HepG2 (cell line): ENCODE measurements at regions of chr9 and their contacts with region 1.

Region 1: DNA sequence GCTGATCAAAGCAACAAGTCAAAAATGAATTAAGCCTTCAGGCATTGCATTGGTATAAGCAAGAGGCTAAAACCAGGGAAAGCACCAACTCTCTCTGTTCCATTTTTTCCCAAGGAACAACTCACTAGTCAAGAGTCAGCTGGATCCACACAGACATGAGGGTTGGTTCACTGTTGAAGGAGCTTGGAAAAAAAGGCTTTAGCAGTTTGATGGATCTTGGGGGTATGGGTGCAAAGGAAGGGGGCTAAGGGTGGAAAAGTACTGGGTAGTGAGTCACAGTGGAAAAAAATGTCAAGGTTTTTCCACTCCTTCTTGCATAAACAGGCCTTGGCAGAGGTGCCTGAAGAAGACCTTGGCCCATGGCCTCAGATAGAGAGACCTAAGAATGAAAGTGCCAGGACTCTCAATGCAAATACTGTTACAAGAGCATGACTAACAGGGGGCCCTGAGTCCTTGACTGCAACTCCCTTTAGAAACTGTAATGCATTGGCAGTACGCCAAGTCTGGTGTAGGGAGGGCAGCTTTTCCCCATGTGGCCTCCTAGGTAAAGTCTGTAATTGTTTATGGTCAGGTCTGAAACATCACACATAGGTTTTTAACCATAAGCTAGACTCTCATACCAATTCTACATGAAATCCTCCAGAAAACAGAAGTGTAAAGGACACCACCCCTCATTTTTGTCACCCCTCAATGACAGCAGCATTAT is 23.7 kb downstream of the ACTL7A start:
- DNase-seq: peak; percentile 100
- ATAC-seq: peak; percentile 94
- H3K4me3 ChIP-seq: peak overlapping the region; percentile 57 to 67 (median 66); a peak in 5 of 6 replicates
- H3K27ac ChIP-seq: peak overlapping the region; percentile 99
- H3K4me1 ChIP-seq: peaks cover 90% of the 10 kb centered on the region
- H3K27me3 ChIP-seq: no peaks in the 10 kb centered on the region
- CTCF ChIP-seq: no peak
- EP300 ChIP-seq: peak; percentile 99 to 100
- POLR2A ChIP-seq: peak; percentile 75 to 83
- RAD21 ChIP-seq: no peak

Region 2: DNA sequence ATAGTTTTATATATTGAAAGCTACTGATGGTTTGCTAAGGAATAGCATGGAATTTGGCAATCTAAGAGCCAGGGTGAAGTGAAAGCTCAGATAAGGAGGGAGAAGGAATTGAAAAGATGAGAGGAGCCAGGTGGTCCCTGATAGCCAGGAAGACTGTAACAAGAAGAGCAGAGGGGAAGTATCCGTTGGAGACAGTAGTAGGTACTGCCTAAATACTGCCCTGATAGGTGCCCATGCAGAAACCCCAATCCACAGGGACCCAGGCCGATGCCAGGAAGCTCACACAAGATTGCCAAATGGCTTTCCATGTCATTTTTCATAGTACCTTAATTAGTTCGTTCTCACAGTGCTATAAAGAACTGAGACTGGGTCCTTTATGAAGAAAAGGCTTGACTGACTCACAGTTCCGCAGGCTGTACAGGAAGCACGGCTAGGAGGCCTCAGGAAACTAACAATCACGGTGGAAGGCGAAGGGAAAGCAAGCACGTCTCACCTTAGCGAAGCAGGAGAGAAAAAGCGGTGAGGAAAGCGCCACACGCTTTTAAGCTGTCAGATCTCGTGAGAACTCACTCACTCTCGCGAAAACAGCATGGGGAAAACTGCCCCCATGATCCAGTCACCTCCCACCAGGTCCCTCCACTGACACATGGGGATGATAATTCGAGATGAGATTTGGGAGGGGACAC is 43.0 kb before region 1 on chr9:
- CTCF ChIA-PET with region 1: no interaction called
- POLR2A ChIA-PET with region 1: no interaction called
- in situ Hi-C with region 1: no loop called
- intact Hi-C with region 1: no loop called
- DNase-seq: no peak
- ATAC-seq: no peak
- H3K4me3 ChIP-seq: no peak overlapping the region
- H3K27ac ChIP-seq: no peak overlapping the region
- H3K4me1 ChIP-seq: peaks cover 6% of the 10 kb centered on the region
- H3K27me3 ChIP-seq: no peaks in the 10 kb centered on the region
- CTCF ChIP-seq: no peak
- EP300 ChIP-seq: no peak
- POLR2A ChIP-seq: no peak
- RAD21 ChIP-seq: no peak

Region 3: DNA sequence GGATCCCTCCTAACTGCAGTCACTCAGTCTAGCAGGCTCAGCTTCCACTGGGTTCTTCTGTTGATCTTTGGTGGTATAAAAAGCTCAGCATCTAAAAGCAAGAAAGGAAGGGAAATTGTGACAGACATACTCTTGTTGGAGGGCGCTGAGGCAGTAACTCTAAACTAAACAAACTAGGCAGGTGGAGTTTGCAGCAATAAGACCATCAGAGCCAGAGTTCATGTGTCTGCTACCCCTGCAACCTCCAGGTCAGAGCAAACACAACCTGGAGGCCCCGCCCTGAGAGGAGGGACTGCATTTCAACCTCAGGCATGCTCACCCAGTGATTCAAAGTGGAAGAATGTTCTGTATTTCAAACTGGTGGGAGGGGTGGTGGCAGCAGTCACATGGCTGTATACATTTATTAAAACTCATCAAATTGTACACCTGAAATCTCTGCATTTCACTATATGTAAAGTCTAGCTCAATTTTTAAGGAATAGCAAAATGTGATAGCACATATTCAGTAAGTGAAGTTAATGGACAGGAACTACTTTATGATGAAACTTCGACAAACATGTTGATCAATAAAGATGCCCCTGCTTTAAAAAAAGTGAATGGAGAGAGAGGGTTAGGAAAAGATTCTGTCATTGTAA is 16.6 kb before region 1 on chr9:
- CTCF ChIA-PET with region 1: no interaction called
- POLR2A ChIA-PET with region 1: interaction called, 45 read pairs
- in situ Hi-C with region 1: no loop called
- intact Hi-C with region 1: no loop called
- DNase-seq: peak; percentile 97
- ATAC-seq: peak; percentile 86
- H3K4me3 ChIP-seq: no peak overlapping the region
- H3K27ac ChIP-seq: peak overlapping the region; percentile 70
- H3K4me1 ChIP-seq: peaks cover 91% of the 10 kb centered on the region
- H3K27me3 ChIP-seq: no peaks in the 10 kb centered on the region
- CTCF ChIP-seq: peak; percentile 20; the same call in 1 of the 2 replicates
- EP300 ChIP-seq: peak; percentile 15 to 84; a peak in 3 of 4 replicates
- POLR2A ChIP-seq: peak; percentile 44 to 54; a peak in 3 of 4 replicates
- RAD21 ChIP-seq: peak; percentile 39; the same call in 1 of the 2 replicates

Region 4: GRCh38 chr9:108874058-108874788 is 11.6 kb before region 1 on chr9:
- CTCF ChIA-PET with region 1: no interaction called
- POLR2A ChIA-PET with region 1: interaction called, 45 read pairs
- in situ Hi-C with region 1: no loop called
- intact Hi-C with region 1: no loop called
- DNase-seq: no peak
- ATAC-seq: no peak
- H3K4me3 ChIP-seq: no peak overlapping the region
- H3K27ac ChIP-seq: no peak overlapping the region
- H3K4me1 ChIP-seq: peaks cover 88% of the 10 kb centered on the region
- H3K27me3 ChIP-seq: no peaks in the 10 kb centered on the region
- CTCF ChIP-seq: no peak
- EP300 ChIP-seq: no peak
- POLR2A ChIP-seq: no peak
- RAD21 ChIP-seq: no peak

Region 5: DNA sequence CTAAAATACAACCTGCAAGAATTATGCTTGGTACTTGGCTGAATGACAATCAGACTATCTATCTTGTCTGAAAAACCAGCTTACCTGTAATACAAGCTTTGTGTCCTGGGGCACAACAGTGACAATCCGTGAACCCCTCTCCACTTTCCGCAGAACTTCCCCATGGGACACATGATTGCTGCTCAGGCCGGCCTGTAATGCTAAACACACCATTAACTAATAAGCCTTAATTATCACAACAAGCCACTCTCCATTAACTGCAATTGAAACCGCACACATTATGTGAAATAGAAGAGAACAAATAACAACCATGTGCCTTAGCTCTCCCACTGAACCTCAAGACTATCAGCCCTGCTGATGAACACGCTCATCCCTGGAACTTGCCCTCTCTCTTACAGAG is 14.4 kb after region 1 on chr9:
- CTCF ChIA-PET with region 1: no interaction called
- POLR2A ChIA-PET with region 1: interaction called, 32 read pairs
- in situ Hi-C with region 1: no loop called
- intact Hi-C with region 1: no loop called
- DNase-seq: no peak
- ATAC-seq: no peak
- H3K4me3 ChIP-seq: no peak overlapping the region
- H3K27ac ChIP-seq: peak overlapping the region; percentile 55
- H3K4me1 ChIP-seq: peaks cover 55% of the 10 kb centered on the region
- H3K27me3 ChIP-seq: no peaks in the 10 kb centered on the region
- CTCF ChIP-seq: no peak
- EP300 ChIP-seq: no peak
- POLR2A ChIP-seq: no peak
- RAD21 ChIP-seq: no peak

Region 6: DNA sequence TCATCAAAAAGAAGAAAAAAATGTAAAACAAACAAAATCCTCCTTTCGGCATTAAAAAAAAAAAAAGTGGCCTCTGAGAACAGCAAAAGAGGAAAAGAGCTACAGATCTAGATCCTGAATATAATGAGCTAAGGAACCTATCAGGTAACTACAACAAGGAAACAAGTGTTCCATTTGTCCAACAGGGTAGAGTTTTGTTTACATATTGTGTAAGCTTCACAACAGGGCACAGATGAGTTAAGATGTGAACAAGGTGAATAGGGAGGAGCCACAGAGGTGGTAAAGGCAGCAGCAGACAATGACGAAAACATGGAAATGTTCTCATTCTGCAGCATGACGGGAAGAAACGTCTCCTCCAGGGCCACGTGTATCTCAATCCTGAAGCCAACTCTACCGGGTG is 33.7 kb after region 1 on chr9:
- CTCF ChIA-PET with region 1: no interaction called
- POLR2A ChIA-PET with region 1: interaction called, 12 read pairs
- in situ Hi-C with region 1: no loop called
- intact Hi-C with region 1: no loop called
- DNase-seq: peak; percentile 67
- ATAC-seq: peak; percentile 90
- H3K4me3 ChIP-seq: no peak overlapping the region
- H3K27ac ChIP-seq: peak overlapping the region; percentile 32
- H3K4me1 ChIP-seq: peaks cover 23% of the 10 kb centered on the region
- H3K27me3 ChIP-seq: no peaks in the 10 kb centered on the region
- CTCF ChIP-seq: no peak
- EP300 ChIP-seq: no peak
- POLR2A ChIP-seq: no peak
- RAD21 ChIP-seq: no peak

Region 7: DNA sequence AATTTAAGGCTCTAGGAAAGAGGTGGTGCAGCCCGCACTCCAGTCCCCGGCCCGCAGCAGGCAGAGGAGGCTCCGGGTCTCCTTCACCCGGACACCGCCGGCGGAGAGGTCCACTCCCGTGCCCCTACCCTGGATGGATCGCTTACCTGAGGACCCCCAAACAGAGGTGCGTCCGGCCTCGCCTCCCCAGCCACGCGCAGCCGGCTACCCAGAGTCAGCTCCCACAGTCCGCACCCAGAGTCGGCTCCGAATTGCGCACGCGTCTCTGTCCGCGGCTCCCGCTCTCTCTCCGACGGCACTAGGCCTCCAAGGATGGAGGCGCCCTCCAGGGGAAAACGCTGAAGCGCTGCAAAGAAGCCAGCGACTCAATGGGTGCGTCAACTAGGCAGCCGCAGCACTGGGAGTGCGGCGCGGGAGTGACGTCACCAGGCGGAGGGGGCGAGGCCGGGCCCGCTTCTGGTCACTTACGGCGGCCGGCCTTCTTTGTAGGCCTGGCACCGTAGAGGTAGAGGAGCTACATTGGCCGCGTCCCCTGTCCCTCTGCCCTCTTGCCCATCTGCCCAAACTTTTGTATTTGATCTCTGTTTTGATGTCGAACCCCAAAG is 48.0 kb after region 1 on chr9 and contains the start of gene ELP1:
- CTCF ChIA-PET with region 1: no interaction called
- POLR2A ChIA-PET with region 1: interaction called, 7 read pairs
- in situ Hi-C with region 1: loop called (anchors 5 kb)
- intact Hi-C with region 1: loop called (anchors 5 kb)
- DNase-seq: peak; percentile 93
- ATAC-seq: peak; percentile 94
- H3K4me3 ChIP-seq: peak within 1 kb of the TSS; percentile 84 to 100 (median 95)
- H3K27ac ChIP-seq: peak within 1 kb of the TSS; percentile 84
- H3K4me1 ChIP-seq: peaks cover 44% of the 10 kb centered on the region
- H3K27me3 ChIP-seq: no peaks in the 10 kb centered on the region; a peak in 1 of 5 replicates
- CTCF ChIP-seq: peak; percentile 91
- EP300 ChIP-seq: no peak
- POLR2A ChIP-seq: peak; percentile 46 to 74; a peak in 3 of 4 replicates
- RAD21 ChIP-seq: peak; percentile 78
- total RNA-seq, gene ELP1: 275 and 437 TPM in 2 replicates

Region 8: GRCh38 chr9:108953983-108954574 is 68.3 kb after region 1 on chr9:
- CTCF ChIA-PET with region 1: interaction called, 12 read pairs
- POLR2A ChIA-PET with region 1: interaction called, 6 read pairs
- in situ Hi-C with region 1: no loop called
- intact Hi-C with region 1: loop called (anchors 2 kb)
- DNase-seq: peak; percentile 61
- ATAC-seq: no peak
- H3K4me3 ChIP-seq: no peak overlapping the region
- H3K27ac ChIP-seq: no peak overlapping the region
- H3K4me1 ChIP-seq: no peaks in the 10 kb centered on the region
- H3K27me3 ChIP-seq: no peaks in the 10 kb centered on the region
- CTCF ChIP-seq: peak; percentile 68
- EP300 ChIP-seq: no peak
- POLR2A ChIP-seq: no peak
- RAD21 ChIP-seq: peak; percentile 41; the same call in 1 of the 2 replicates